ENCODE measurements at regions of chr10 and their contacts with region 1.

Region 1: DNA sequence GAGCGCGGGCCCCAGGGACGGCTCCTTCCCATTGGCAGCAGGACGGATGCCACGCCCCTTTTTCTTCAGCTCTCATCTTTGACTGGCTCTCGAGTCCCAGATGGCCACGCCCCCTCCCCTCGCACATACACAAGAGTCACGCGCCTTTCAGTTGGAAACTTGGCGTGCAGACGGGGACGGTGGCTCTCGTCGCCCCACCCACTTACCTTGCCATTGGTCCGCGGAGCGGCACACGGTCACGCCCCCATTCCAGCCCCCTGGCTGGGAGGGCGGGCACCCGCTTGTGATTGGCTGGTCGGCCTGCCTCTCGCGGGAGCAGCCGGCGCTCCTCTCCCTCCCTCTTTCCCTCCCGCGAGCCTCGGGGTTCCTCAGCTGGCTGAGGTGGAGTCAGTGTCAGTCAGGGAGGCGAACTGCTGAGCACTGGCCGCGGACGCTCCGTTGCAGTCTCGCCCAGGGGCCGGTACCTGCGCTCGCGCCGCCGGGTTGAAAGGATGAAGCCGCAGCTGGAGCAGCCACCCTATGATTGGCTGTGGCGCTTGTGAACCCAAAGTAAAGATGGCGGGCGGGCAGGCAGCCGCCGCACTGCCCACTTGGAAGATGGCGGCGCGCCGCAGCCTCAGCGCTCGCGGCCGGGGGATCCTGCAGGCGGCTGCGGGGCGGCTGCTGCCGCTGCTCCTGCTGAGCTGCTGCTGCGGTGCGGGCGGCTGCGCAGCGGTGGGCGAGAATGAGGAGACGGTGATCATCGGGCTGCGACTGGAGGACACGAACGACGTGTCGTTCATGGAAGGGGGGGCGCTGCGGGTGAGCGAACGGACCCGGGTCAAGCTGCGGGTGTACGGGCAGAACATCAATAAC is at the start of gene CNNM2:
- DNase-seq: peak; percentile 100
- ATAC-seq: peak; percentile 96 to 99 (median 98)
- H3K4me3 ChIP-seq: peak within 1 kb of the TSS; percentile 51 to 95 (median 86)
- H3K27ac ChIP-seq: peak within 1 kb of the TSS; percentile 26 to 91 (median 84)
- H3K4me1 ChIP-seq: peaks cover 0 to 45% (median 32%) of the 10 kb centered on the region in 12 donors
- H3K27me3 ChIP-seq: no peaks in the 10 kb centered on the region
- CTCF ChIP-seq: peak in 1 of 12 donors; percentile 11
- POLR2A ChIP-seq: peak in 1 of 2 donors; percentile 67
- total RNA-seq, gene CNNM2: 2.9 to 6.3 (median 4.1) TPM

Region 2: DNA sequence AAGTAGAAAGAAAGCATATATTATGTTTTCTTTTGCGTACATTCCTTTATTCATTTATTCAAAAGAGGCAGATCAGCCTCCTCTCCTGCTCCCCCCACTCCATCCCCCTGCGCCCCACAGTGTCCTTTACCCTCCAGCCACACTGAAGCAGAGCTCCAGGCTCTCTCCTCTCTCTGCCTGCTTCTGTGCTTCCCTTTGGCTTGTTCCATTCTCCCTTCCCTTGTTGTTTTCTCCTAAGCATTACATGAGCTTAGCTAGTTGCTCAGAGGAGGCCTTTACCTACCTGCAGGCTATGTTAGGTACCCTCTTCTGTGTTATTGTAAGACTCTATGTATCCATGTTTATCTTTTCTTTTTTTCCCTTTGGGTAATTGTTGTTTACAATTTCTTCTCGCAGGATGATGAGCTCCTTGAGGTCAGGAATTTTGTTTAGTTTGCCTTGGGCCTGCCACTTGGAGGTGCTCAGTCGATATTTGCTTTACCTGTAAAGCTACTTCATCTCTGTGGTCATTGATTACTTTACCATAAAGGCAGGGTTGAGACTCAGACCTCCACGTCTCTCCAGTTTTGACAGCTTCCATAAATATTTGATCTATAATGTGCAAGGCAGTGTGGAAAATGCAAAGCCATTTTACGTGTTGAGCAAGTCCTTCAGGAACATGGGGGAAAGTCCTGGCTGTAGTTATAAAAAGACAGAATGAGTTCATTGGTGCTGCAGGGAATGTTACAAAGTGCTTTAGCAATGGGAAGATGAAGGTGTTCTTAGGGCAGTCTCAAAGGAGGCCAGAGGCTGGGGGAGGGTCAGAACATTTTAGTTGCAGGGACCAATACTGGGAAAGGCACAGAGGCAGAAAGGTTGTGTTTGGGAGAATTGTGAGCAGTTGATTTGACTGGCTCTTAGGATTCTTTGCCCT is 27.5 kb after region 1 on chr10:
- intact Hi-C with region 1: no loop called
- DNase-seq: no peak
- ATAC-seq: peak in 1 of 4 donors; percentile 20
- H3K4me3 ChIP-seq: no peak overlapping the region
- H3K27ac ChIP-seq: no peak overlapping the region
- H3K4me1 ChIP-seq: peaks cover 0 to 22% (median 8%) of the 10 kb centered on the region in 12 donors
- H3K27me3 ChIP-seq: no peaks in the 10 kb centered on the region
- CTCF ChIP-seq: no peak
- POLR2A ChIP-seq: no peak

Region 3: DNA sequence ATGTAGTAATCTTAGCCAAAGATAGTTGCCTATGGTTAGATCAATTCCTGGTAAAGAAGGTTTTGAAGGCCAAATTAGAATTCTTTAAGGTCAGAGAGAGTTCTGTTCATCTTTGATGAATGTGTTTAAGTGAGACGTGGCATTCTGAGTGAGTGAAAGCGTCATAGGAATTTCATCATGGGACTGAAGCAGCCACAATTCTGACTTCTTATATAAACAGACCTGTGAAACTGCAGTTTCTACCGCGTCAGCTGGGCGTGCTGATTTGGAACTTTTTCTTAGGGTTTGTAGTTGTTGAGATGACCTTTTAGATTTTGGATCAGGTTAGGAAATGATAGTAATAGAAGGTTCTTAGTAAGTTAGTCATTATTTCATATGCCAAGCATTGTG is 103.7 kb after region 1 on chr10:
- intact Hi-C with region 1: no loop called
- DNase-seq: no peak
- ATAC-seq: no peak
- H3K4me3 ChIP-seq: no peak overlapping the region
- H3K27ac ChIP-seq: no peak overlapping the region
- H3K4me1 ChIP-seq: no peaks in the 10 kb centered on the region
- H3K27me3 ChIP-seq: no peaks in the 10 kb centered on the region
- CTCF ChIP-seq: no peak
- POLR2A ChIP-seq: no peak

Region 4: DNA sequence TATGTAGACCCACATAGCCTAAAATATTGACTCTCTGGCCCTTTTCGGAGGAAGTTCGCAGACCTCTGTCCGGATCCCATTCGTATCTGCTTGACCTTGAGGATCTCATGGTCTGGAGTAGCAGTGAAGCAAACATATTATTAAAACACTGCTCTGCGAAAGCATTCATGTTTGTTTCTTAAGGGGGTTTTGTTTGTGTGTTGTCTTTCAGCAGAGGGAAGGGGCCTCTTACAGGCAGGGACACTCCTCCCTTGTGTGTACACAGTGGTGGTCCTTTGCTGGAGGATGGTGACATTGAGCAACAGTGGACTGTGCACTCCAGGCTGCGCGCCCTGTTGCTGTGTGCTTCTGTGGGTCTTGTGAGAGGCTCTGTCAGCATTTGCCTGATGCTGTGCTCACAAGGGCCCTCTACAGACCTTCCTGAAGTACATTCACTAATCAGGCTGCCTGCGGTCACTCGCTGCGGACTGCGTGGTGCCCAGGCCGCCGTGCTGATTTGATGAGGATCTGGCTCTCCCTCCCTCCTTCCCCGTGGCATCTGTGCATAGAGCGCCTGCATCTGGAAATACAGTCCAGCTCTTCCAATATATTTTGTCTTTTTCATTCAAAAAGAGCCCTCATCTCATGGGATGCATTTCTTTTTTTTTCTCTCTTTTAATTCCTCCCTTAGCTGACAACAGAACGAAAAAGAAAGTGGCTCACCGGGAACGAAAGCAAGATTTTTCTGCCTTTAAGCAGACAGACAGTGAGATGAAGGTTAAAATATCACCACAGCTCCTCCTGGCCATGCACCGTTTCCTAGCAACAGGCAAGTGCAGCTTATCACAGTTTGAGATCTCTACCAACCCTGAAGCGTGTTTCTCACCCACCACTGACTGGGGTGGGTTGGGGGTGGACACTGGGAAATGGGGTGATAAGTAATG is 135.7 kb after region 1 on chr10:
- intact Hi-C with region 1: loop called in 2 of 10 experiments (anchors 5 kb)
- DNase-seq: peak; percentile 62 to 73 (median 65)
- ATAC-seq: peak; percentile 67 to 95 (median 88)
- H3K4me3 ChIP-seq: peak overlapping the region in 9 of 12 donors; percentile 18 to 52 (median 44)
- H3K27ac ChIP-seq: peak overlapping the region in 8 of 12 donors; percentile 0 to 53 (median 28)
- H3K4me1 ChIP-seq: peaks cover 0 to 42% (median 16%) of the 10 kb centered on the region in 12 donors
- H3K27me3 ChIP-seq: no peaks in the 10 kb centered on the region
- CTCF ChIP-seq: peak in 9 of 12 donors; percentile 16 to 56 (median 33)
- POLR2A ChIP-seq: no peak

Region 5: GRCh38 chr10:103069453-103070331 is 151.5 kb after region 1 on chr10:
- intact Hi-C with region 1: loop called (anchors 1 to 5 kb)
- DNase-seq: peak in 4 of 5 donors; percentile 37 to 68 (median 56)
- ATAC-seq: peak; percentile 40 to 84 (median 73)
- H3K4me3 ChIP-seq: no peak overlapping the region
- H3K27ac ChIP-seq: no peak overlapping the region
- H3K4me1 ChIP-seq: peaks cover 0 to 18% (median 0%) of the 10 kb centered on the region in 12 donors
- H3K27me3 ChIP-seq: no peaks in the 10 kb centered on the region
- CTCF ChIP-seq: peak; percentile 47 to 77 (median 64)
- POLR2A ChIP-seq: no peak

Region 6: GRCh38 chr10:103333925-103334520 is 415.8 kb after region 1 on chr10:
- intact Hi-C with region 1: loop called in 4 of 10 experiments (anchors 5 to 10 kb)
- DNase-seq: no peak
- ATAC-seq: no peak
- H3K4me3 ChIP-seq: no peak overlapping the region
- H3K27ac ChIP-seq: no peak overlapping the region
- H3K4me1 ChIP-seq: no peaks in the 10 kb centered on the region
- H3K27me3 ChIP-seq: no peaks in the 10 kb centered on the region
- CTCF ChIP-seq: peak; percentile 39 to 69 (median 61)
- POLR2A ChIP-seq: no peak

Measured in heart left ventricle (tissue), 16 donors.